HEK293T (cell line): ENCODE measurements at regions of chr1 and their contacts with region 1.

Region 1: GRCh38 chr1:204806943-204807687 is 63.5 kb upstream of the NFASC start:
- DNase-seq: peak; percentile 94

Region 2: GRCh38 chr1:204565617-204566582 is 241.2 kb before region 1 on chr1:
- CTCF ChIA-PET with region 1: interaction called, 53 read pairs
- POLR2A ChIA-PET with region 1: no interaction called
- DNase-seq: peak; percentile 90

Region 3: DNA sequence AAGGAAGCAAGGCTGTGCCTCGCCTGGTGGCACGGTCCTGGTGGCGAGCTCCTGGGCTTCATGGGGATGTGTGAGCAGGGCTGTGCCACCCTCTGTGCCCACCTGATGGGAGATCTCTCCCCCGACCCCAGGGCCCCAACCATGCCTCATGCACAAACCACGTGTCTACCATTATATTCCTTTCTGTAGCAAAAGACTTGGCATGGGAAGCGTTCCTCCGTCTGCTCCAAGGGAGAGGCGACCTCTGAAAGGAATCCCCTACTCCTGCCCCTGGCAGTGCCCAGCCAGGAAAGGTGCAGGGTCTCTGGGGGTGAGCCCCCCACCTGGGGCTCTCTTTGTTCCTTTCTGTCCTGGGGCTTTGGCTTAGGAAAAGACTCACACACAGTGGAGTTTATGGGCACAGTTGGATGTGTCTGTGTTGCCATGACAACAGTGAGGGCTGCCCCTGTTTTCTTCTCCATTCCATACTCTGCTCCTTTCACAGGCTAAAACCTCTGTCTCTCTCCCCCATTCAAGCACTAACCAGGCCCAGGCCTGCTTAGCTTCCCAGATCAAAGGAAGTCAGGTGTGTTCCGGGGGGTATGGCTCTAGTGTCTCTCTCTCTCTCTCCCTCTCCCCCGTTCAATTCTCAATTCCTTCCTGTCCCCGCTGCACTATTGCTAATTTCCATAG is 100.1 kb before region 1 on chr1:
- CTCF ChIA-PET with region 1: no interaction called
- POLR2A ChIA-PET with region 1: no interaction called
- DNase-seq: no peak

Region 4: DNA sequence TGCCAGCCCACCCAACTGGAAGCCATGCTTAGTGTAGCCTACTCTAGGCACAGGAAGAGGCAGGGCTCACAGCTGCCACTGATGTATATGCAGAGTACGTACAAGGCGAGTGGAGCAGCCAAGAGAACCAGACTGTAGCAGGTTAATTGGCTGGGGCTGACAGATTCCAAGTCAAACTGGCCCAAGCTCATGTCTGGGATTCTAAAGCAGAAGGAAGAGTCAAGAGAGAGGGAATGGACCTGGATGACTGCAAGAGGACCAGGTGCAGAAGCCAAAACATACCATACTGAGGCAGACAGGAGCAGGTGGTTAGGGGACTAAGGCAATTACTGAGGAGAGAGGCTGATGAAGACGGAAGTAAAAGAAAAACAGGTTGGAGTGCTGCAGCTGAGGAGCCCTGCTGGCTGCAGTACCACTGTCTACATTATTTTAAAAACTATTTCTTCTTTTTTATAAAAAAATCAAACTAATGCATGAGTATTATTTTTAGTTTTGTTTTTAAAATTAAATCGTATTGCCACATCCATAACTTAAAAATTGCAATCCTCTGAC is 70.2 kb before region 1 on chr1:
- CTCF ChIA-PET with region 1: no interaction called
- POLR2A ChIA-PET with region 1: no interaction called
- DNase-seq: no peak

Region 5: GRCh38 chr1:204763706-204764427 is 43.2 kb before region 1 on chr1:
- CTCF ChIA-PET with region 1: interaction called, 14 read pairs
- POLR2A ChIA-PET with region 1: no interaction called
- DNase-seq: peak; percentile 90

Region 6: GRCh38 chr1:204791453-204792353 is 15.4 kb before region 1 on chr1:
- CTCF ChIA-PET with region 1: interaction called, 23 read pairs
- POLR2A ChIA-PET with region 1: interaction called, 3 read pairs
- DNase-seq: peak; percentile 93

Region 7: DNA sequence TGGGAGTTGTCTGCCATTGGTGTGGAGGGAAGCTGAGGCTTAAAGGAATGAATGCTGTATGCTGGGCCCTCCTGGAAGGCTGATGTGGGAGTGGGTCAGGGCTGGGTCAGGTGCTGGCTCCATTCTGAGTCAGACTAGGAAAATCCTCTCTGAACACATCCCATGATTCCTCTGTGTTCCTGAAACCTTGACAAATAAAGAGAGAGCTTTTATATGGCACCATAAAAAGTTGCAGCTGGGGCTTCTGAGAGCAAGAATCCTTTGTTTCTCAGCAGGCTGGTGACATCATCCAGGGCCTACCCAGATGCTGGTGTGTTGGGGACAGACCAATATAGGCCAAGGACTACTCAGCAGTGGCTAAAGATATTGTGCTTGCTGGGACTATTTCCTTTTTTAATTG is 35.8 kb after region 1 on chr1:
- CTCF ChIA-PET with region 1: no interaction called
- POLR2A ChIA-PET with region 1: no interaction called
- DNase-seq: no peak

Region 8: DNA sequence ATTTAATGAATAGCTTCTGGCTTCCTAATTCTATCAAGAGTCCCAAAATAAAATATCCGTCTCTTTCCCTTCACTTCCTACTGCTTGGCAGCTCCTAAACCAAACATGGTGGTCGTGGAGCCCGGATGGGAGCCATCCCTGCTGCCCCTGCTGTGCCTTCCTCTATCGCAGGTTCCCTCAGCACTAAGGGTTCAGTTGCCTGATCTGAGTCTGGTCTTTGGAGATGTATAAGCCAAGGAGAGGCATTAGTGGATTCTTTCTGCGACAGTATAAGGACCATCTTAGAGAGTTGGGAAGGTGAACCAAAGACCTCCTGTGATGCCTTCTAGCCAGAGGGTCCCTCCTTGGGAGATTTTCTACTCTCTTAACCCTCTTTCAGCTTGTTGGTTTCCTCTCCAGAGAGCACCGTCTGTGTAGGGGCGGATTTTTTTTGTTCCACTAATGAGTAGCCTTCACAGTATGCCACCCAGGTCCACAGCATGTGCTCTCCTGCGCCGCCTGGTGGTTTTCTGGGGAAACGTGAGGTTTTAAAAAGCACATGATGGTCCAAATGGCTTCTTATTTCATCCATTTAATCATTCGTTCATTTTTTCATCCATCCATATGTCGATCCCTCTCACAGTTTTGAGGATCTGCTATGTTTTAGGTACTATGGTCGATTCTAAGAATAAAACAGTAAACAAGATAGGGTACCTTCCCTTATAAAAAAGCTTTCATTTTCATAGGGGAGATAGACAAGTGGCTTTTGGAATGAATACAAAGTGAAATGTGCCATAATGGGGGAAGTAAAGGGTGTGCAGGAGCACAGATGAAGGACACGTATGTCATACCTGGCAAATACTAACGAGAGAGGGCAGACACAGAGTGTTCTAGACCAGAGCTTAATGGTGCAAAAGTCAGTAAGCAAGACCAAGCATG is 134.6 kb after region 1 on chr1:
- CTCF ChIA-PET with region 1: interaction called, 34 read pairs
- POLR2A ChIA-PET with region 1: no interaction called
- DNase-seq: peak; percentile 83